Endothelial cell of umbilical vein (primary cell): ENCODE measurements at regions of chr5 and their contacts with region 1.

Region 1: GRCh38 chr5:54969856-54970828 is 15.3 kb downstream of the ESM1 start:
- DNase-seq: peak; percentile 88
- H3K4me3 ChIP-seq: no peak overlapping the region
- H3K27ac ChIP-seq: no peak overlapping the region
- H3K4me1 ChIP-seq: peaks cover 27% of the 10 kb centered on the region
- H3K27me3 ChIP-seq: no peaks in the 10 kb centered on the region
- CTCF ChIP-seq: no peak
- POLR2A ChIP-seq: no peak

Region 2: DNA sequence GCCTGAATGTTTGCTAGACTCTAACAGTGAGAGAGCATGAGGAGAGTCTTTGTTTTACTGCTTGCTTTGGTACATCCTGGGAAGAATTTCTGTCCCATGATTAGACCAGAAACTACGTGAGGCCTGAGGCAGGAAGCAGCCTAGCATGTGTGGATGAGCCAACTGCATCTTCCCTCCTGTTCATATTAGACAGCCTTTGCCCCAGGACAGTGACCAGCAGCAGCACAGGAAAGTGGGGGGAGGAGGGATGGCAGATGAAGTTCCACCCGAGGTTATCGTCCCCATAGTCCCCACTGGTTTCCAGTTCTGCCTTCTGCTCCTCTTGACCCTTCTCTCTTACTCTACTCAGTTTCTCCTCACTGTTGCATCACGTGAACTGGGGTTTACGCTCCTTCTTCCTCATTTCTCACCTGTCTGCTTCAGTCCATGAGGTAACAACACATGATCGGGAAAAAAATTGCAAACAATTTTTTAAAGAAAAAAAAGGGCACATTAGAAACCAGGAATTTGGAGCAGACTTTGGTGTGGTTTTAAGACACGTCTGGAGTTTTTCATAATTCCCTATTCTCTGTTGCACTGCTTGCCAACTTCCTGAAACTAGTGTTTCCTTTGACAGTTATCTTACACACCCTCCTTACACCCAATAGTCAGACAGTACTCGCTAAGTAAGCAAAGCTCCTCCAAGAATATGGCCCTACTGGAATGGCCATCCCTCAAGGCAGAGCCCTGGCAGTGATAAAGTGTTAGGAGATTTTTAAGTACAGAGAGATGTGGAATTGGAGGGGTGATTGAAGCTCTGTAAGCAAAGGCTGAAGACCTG is 368.5 kb before region 1 on chr5:
- CTCF ChIA-PET with region 1: no interaction called
- POLR2A ChIA-PET with region 1: no interaction called
- dilution Hi-C with region 1: no loop called
- intact Hi-C with region 1: no loop called
- DNase-seq: no peak
- H3K4me3 ChIP-seq: no peak overlapping the region
- H3K27ac ChIP-seq: no peak overlapping the region
- H3K4me1 ChIP-seq: no peaks in the 10 kb centered on the region
- H3K27me3 ChIP-seq: peaks cover 0 to 2% of the 10 kb centered on the region in 2 experiments
- CTCF ChIP-seq: no peak
- POLR2A ChIP-seq: no peak

Region 3: GRCh38 chr5:54753034-54753433 is 217.1 kb before region 1 on chr5:
- CTCF ChIA-PET with region 1: no interaction called
- POLR2A ChIA-PET with region 1: no interaction called
- dilution Hi-C with region 1: no loop called
- intact Hi-C with region 1: no loop called
- DNase-seq: no peak
- H3K4me3 ChIP-seq: no peak overlapping the region
- H3K27ac ChIP-seq: no peak overlapping the region
- H3K4me1 ChIP-seq: no peaks in the 10 kb centered on the region
- H3K27me3 ChIP-seq: no peaks in the 10 kb centered on the region
- CTCF ChIP-seq: no peak
- POLR2A ChIP-seq: no peak

Region 4: GRCh38 chr5:54959673-54960418 is 10.3 kb before region 1 on chr5:
- CTCF ChIA-PET with region 1: interaction called, 37 read pairs
- POLR2A ChIA-PET with region 1: no interaction called
- dilution Hi-C with region 1: no loop called
- intact Hi-C with region 1: no loop called
- DNase-seq: peak; percentile 57
- H3K4me3 ChIP-seq: no peak overlapping the region
- H3K27ac ChIP-seq: no peak overlapping the region
- H3K4me1 ChIP-seq: peaks cover 2% of the 10 kb centered on the region
- H3K27me3 ChIP-seq: no peaks in the 10 kb centered on the region
- CTCF ChIP-seq: peak; percentile 50
- POLR2A ChIP-seq: no peak

Region 5: GRCh38 chr5:54993318-54993717 is 23.2 kb after region 1 on chr5:
- CTCF ChIA-PET with region 1: no interaction called
- POLR2A ChIA-PET with region 1: no interaction called
- dilution Hi-C with region 1: no loop called
- intact Hi-C with region 1: no loop called
- DNase-seq: peak; percentile 76
- H3K4me3 ChIP-seq: no peak overlapping the region
- H3K27ac ChIP-seq: peak overlapping the region; percentile 60
- H3K4me1 ChIP-seq: peaks cover 55% of the 10 kb centered on the region
- H3K27me3 ChIP-seq: no peaks in the 10 kb centered on the region
- CTCF ChIP-seq: no peak
- POLR2A ChIP-seq: no peak